ENCODE measurements at regions of chr19 and their contacts with region 1.

Region 1: DNA sequence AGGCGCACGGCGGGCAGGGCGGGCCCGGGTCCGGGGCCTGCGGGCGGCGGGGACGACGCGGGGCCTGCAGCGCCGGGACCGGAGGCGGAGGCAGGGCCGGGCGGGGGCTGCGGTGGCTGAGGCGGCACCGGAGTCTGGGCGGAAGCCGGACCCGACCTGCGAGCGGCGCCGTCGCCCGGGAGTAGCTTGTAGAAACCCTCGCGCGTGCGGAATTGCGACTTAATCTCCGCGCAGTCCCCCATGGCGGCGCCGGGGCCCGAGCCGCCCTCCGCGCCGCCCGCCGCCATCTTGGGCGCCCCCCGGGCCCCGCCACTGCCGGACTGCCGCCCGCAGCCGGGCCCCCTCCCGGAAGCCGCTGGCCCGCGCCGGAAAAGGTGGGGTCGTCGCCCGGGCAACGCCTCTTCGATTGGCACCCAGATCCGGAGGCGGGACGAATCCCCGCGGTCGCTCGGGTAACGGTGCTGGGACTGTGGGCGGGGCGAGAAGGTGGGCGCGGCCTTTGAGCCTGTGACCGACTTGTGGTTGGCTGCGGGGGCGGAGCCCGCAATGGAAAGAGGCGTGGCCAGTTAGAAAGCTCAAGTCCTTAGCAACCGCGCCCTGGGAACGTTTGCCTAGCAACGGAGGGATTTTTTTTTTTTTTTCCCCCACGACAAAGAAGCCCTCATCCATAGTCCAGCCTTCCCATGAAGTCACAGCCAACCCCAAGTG is at the start of gene DMWD:
- DNase-seq: peak; percentile 99
- H3K4me3 Mint-ChIP-seq: peak within 1 kb of the TSS; percentile 83
- H3K27ac Mint-ChIP-seq: peak within 1 kb of the TSS; percentile 77
- H3K4me1 Mint-ChIP-seq: peaks cover 30% of the 10 kb centered on the region
- H3K27me3 Mint-ChIP-seq: peaks cover 47% of the 10 kb centered on the region
- total RNA-seq, gene DMWD: 35.0 to 37.8 TPM

Region 2: DNA sequence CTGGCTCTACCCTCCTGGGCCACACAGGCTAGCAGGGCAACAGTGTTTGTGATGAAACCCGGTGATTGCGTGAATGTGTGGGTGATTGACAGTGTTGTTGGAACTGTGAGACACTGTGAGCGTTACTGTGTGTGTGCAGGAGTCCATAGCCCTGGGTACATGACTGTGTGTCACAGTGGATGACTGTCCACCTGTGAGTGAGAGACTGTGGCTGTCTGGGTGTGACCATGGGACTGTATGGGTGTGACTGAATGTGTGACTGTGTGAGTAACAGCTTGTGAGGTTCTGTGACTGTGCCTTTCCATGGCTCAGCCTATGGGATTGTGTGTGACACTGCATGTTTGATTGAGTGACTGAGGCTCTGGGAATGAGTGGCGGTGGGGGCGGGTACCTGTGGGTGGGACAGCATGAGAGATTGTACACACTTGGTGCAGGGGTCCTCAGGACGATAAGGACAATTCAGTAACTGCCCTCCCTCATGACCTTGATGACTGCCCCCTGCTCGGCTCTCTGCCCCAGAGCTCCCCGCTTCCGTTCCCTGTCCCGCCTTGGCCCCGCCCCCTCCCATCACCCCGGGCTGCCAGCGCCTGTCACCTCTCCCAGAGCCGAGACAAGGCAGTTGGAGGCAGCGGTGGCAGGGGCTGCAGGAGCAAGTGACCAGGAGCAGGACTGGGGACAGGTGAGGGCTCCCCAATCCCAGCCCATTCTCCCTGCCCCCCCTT is 124.8 kb before region 1 on chr19 and contains the start of gene GIPR:
- CTCF ChIA-PET with region 1: no interaction called
- POLR2A ChIA-PET with region 1: no interaction called
- DNase-seq: peak; percentile 57
- H3K4me3 Mint-ChIP-seq: peak within 1 kb of the TSS; percentile 63
- H3K27ac Mint-ChIP-seq: peak within 1 kb of the TSS; percentile 34
- H3K4me1 Mint-ChIP-seq: peaks cover 40% of the 10 kb centered on the region
- H3K27me3 Mint-ChIP-seq: peaks cover 26% of the 10 kb centered on the region
- total RNA-seq, gene GIPR: 1.3 to 1.4 TPM

Region 3: GRCh38 chr19:45717166-45717982 is 75.2 kb before region 1 on chr19:
- CTCF ChIA-PET with region 1: interaction called, 4 read pairs
- POLR2A ChIA-PET with region 1: interaction called, 15 read pairs
- DNase-seq: peak; percentile 99
- H3K4me3 Mint-ChIP-seq: peak overlapping the region; percentile 92
- H3K27ac Mint-ChIP-seq: peak overlapping the region; percentile 92
- H3K4me1 Mint-ChIP-seq: peaks cover 42% of the 10 kb centered on the region
- H3K27me3 Mint-ChIP-seq: no peaks in the 10 kb centered on the region

Region 4: DNA sequence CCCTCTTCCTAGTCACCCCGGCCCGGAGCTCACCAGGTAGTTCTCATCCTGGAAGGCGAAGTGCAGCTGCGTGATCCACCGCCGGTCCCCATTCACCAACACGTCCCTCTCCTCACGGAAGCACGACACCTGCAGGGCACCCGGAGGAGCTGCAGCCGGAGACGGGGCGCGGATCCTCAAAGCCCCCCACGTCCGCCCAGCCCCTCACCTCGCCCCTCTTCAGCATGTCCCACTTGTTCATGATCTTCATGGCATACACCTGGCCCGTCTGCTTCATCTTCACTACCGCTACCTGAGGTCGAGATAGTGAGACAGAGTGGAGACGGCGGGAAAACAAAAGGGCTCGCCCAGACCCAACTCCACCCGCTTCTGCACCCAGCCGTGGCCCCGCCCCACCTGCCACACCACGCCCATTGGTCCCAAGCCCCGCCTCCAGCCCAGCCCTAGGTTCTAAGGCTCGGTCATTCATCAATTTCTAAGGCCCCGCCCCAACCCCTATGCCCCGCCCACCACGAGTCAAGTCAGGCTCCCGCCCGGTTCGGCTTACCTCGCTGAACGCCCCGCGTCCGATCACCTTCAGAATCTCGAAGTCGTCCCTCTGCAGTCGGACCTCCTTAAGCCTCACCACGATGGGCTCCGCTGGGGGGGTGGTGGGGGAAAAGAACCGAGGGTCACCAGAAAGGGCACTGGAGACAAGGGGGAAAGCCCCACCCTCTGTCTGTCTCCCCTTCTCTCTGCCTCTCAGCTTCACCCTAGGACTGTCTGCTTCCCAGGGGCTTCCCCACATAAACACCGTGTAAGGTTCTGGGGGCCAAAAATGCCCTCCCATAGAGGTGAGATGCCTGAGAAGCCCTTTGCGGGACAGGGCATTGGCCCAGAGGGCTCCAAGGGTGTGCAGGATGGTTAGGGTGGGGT is 13.1 kb before region 1 on chr19:
- CTCF ChIA-PET with region 1: interaction called, 13 read pairs
- POLR2A ChIA-PET with region 1: no interaction called
- DNase-seq: peak; percentile 82
- H3K4me3 Mint-ChIP-seq: peak overlapping the region; percentile 67
- H3K27ac Mint-ChIP-seq: no peak overlapping the region
- H3K4me1 Mint-ChIP-seq: peaks cover 15% of the 10 kb centered on the region
- H3K27me3 Mint-ChIP-seq: peaks cover 17% of the 10 kb centered on the region

Region 5: DNA sequence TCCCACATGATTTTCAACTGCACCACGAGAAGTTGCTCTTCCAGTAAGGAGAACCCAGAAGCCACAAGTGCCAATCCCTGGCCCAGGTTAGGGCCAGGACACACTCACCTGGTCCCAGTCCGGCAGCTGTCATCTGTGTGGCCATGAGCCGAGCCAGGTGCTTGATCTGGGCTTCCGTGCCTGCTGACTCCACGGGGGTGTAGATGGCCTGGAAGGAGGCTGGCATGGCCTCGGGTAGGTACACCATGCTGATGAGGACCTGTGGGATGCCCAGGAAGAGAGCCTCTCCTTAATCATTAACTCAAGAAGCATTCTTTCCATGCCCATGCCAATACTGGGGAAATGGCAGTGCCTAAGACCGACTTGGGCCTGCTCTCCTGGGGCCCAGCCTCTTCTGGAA is 42.3 kb after region 1 on chr19:
- CTCF ChIA-PET with region 1: no interaction called
- POLR2A ChIA-PET with region 1: no interaction called
- DNase-seq: no peak
- H3K4me3 Mint-ChIP-seq: no peak overlapping the region
- H3K27ac Mint-ChIP-seq: no peak overlapping the region
- H3K4me1 Mint-ChIP-seq: no peaks in the 10 kb centered on the region
- H3K27me3 Mint-ChIP-seq: no peaks in the 10 kb centered on the region